ENCODE measurements at regions of chr12 and their contacts with region 1.

Region 1: GRCh38 chr12:66786531-66787308 is 107.8 kb upstream of the GRIP1 start:
- DNase-seq: no peak
- ATAC-seq: no peak
- H3K4me3 ChIP-seq: no peak overlapping the region
- H3K4me3 Mint-ChIP-seq: no peak overlapping the region
- H3K27ac ChIP-seq: no peak overlapping the region
- H3K27ac Mint-ChIP-seq: no peak overlapping the region
- H3K4me1 ChIP-seq: no peaks in the 10 kb centered on the region
- H3K4me1 Mint-ChIP-seq: peaks cover 0 to 14% (median 0%) of the 10 kb centered on the region in 3 donors
- H3K27me3 ChIP-seq: no peaks in the 10 kb centered on the region
- H3K27me3 Mint-ChIP-seq: no peaks in the 10 kb centered on the region

Region 2: DNA sequence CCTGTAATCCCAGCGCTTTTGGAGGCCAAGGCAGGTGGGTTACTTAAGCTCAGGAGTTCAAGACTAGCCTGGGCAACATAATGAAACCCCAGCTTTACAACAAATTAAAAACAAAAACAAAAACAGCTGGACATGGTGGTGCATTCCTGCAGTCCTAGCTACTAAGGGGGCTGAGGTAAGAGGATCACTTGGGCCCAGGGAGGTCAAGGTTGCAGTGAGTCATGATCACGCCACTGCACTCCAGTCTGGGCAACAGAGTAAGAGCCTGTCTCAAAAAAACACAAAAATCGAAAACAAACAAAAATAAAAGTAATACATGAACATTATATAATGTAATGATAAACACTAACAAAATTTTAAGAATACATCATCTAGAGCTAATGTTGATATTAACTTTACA is 61.7 kb before region 1 on chr12:
- CTCF ChIA-PET with region 1: no interaction called
- POLR2A ChIA-PET with region 1: interaction called in 1 of 2 experiments, 12 read pairs
- DNase-seq: no peak
- ATAC-seq: no peak
- H3K4me3 ChIP-seq: no peak overlapping the region
- H3K4me3 Mint-ChIP-seq: no peak overlapping the region
- H3K27ac ChIP-seq: no peak overlapping the region
- H3K27ac Mint-ChIP-seq: no peak overlapping the region
- H3K4me1 ChIP-seq: no peaks in the 10 kb centered on the region
- H3K4me1 Mint-ChIP-seq: no peaks in the 10 kb centered on the region
- H3K27me3 ChIP-seq: peaks cover 0 to 6% of the 10 kb centered on the region in 2 experiments
- H3K27me3 Mint-ChIP-seq: no peaks in the 10 kb centered on the region

Region 3: GRCh38 chr12:66739933-66740648 is 46.6 kb before region 1 on chr12:
- CTCF ChIA-PET with region 1: no interaction called
- POLR2A ChIA-PET with region 1: no interaction called
- DNase-seq: no peak
- ATAC-seq: no peak
- H3K4me3 ChIP-seq: no peak overlapping the region
- H3K4me3 Mint-ChIP-seq: no peak overlapping the region
- H3K27ac ChIP-seq: no peak overlapping the region
- H3K27ac Mint-ChIP-seq: no peak overlapping the region
- H3K4me1 ChIP-seq: peaks cover 2 to 16% of the 10 kb centered on the region in 2 experiments
- H3K4me1 Mint-ChIP-seq: peaks cover 16 to 32% (median 30%) of the 10 kb centered on the region in 3 donors
- H3K27me3 ChIP-seq: peaks cover 0 to 3% of the 10 kb centered on the region in 2 experiments
- H3K27me3 Mint-ChIP-seq: peaks cover 0 to 4% of the 10 kb centered on the region in 2 donors

Region 4: DNA sequence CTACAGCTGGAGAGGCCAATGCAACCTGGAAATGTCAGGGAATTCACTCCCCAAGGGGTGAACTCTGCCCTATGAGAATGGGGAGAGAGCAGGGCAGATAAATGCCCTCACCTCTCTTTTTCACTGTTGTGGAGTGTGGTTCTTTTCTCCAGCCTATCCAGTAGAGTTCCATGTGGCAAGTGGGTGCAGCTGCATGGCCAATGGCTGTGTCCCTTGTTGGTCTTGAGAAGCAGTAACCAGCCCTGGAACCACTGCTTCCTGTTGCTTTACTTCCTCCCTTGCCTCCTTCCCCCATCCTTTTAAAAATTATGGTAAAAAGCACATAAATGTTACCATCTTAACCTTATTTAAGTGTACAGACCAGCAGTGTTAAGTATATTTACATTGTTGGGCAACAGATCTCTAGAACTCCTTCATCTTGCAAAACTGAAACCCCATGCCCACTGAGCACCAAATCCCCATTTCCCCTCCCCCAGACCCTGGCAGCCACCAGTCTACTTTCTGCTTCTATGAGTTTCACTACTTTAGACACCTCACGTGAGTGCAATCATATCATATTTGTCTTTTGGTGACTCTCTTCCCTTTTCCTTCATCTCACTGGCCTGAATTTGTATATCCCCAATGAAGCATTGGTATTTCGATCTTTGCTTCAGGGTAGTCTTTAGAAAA is 30.9 kb before region 1 on chr12:
- CTCF ChIA-PET with region 1: no interaction called
- POLR2A ChIA-PET with region 1: no interaction called
- DNase-seq: peak in 3 of 35 experiments; percentile 0 to 11 (median 2)
- ATAC-seq: no peak
- H3K4me3 ChIP-seq: no peak overlapping the region
- H3K4me3 Mint-ChIP-seq: peak overlapping the region in 1 of 3 donors; percentile 2
- H3K27ac ChIP-seq: no peak overlapping the region
- H3K27ac Mint-ChIP-seq: no peak overlapping the region
- H3K4me1 ChIP-seq: peaks cover 0 to 6% of the 10 kb centered on the region in 2 experiments
- H3K4me1 Mint-ChIP-seq: peaks cover 5 to 10% (median 9%) of the 10 kb centered on the region in 3 donors
- H3K27me3 ChIP-seq: no peaks in the 10 kb centered on the region
- H3K27me3 Mint-ChIP-seq: peaks cover 0 to 14% of the 10 kb centered on the region in 2 donors